MCF 10A (cell line): ENCODE measurements at regions of chr4 and their contacts with region 1.

Region 1: DNA sequence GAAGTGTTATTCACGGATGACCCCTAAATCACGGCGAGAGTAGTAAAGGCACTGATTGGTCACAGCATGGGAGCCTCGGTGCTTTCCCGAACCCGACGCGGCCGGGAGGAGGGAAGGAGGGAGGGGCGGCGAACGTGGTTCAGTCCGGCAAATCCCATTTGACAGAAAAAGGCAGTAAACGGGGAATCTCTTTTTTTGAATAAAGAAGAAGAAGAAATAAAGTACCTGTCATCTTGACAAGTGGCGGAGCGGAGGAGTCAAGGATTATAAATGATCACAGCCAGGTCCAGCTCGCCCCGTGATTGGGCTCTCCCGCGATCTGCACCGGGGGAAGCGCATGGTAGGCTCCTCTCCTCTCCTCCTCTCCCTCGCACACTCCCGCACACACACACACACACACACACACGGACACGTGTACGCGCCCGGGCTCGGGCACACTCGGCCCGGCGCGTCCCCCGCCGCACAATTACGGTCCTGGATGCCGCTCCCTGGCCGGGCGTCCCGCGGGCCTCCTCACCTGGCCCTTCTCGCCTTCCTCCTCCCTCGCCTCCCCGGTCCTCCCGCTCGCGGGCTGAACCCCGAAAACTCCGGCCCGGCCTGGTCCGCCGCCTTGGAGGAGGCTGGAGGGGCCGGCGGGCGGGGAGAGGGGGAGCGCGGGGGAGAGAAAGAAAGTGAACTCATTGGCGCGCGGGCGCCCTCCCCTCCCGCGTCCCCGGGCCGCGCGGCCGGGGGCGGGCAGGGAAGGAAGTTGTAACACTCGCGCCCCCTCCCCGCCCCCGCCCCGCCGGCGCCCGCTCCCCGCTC is 99.2 kb upstream of the TENM3 start:
- DNase-seq: peak; percentile 77
- H3K4me3 Mint-ChIP-seq: peak overlapping the region; percentile 98
- H3K27ac Mint-ChIP-seq: peak overlapping the region; percentile 99
- H3K4me1 Mint-ChIP-seq: peaks cover 16% of the 10 kb centered on the region
- H3K27me3 Mint-ChIP-seq: no peaks in the 10 kb centered on the region
- CTCF ChIP-seq: no peak

Region 2: GRCh38 chr4:181569553-181569952 is 574.5 kb before region 1 on chr4:
- CTCF ChIA-PET with region 1: no interaction called
- POLR2A ChIA-PET with region 1: no interaction called
- intact Hi-C with region 1: loop called (anchors 1 kb)
- DNase-seq: peak; percentile 67
- H3K4me3 Mint-ChIP-seq: no peak overlapping the region
- H3K27ac Mint-ChIP-seq: no peak overlapping the region
- H3K4me1 Mint-ChIP-seq: no peaks in the 10 kb centered on the region
- H3K27me3 Mint-ChIP-seq: no peaks in the 10 kb centered on the region
- CTCF ChIP-seq: peak; percentile 49

Region 3: GRCh38 chr4:181952478-181952877 is 191.5 kb before region 1 on chr4:
- CTCF ChIA-PET with region 1: no interaction called
- POLR2A ChIA-PET with region 1: no interaction called
- intact Hi-C with region 1: loop called (anchors 5 kb)
- DNase-seq: peak; percentile 93
- H3K4me3 Mint-ChIP-seq: no peak overlapping the region
- H3K27ac Mint-ChIP-seq: peak overlapping the region; percentile 92
- H3K4me1 Mint-ChIP-seq: peaks cover 27% of the 10 kb centered on the region
- H3K27me3 Mint-ChIP-seq: no peaks in the 10 kb centered on the region
- CTCF ChIP-seq: no peak

Region 4: GRCh38 chr4:182246401-182247205 is 102.6 kb after region 1 on chr4:
- CTCF ChIA-PET with region 1: no interaction called
- POLR2A ChIA-PET with region 1: interaction called, 5 read pairs
- intact Hi-C with region 1: loop called (anchors 1 kb)
- DNase-seq: peak; percentile 81
- H3K4me3 Mint-ChIP-seq: peak overlapping the region; percentile 64
- H3K27ac Mint-ChIP-seq: peak overlapping the region; percentile 7
- H3K4me1 Mint-ChIP-seq: peaks cover 32% of the 10 kb centered on the region
- H3K27me3 Mint-ChIP-seq: no peaks in the 10 kb centered on the region
- CTCF ChIP-seq: no peak

Region 5: GRCh38 chr4:182448281-182449151 is 304.5 kb after region 1 on chr4:
- CTCF ChIA-PET with region 1: interaction called, 5 read pairs
- POLR2A ChIA-PET with region 1: interaction called, 6 read pairs
- intact Hi-C with region 1: loop called (anchors 2 kb)
- DNase-seq: peak; percentile 94
- H3K4me3 Mint-ChIP-seq: peak overlapping the region; percentile 92
- H3K27ac Mint-ChIP-seq: peak overlapping the region; percentile 55
- H3K4me1 Mint-ChIP-seq: peaks cover 15% of the 10 kb centered on the region
- H3K27me3 Mint-ChIP-seq: no peaks in the 10 kb centered on the region
- CTCF ChIP-seq: no peak